ENCODE measurements at regions of chr1 and their contacts with region 1.

Region 1: GRCh38 chr1:74689621-74690363 is 16.2 kb upstream of the ERICH3 start:
- DNase-seq: no peak
- ATAC-seq: no peak
- H3K4me3 Mint-ChIP-seq: no peak overlapping the region
- H3K27ac Mint-ChIP-seq: no peak overlapping the region
- H3K4me1 Mint-ChIP-seq: no peaks in the 10 kb centered on the region
- H3K27me3 Mint-ChIP-seq: no peaks in the 10 kb centered on the region
- CTCF ChIP-seq: peak; percentile 21

Region 2: GRCh38 chr1:73886716-73887115 is 803.1 kb before region 1 on chr1:
- CTCF ChIA-PET with region 1: no interaction called
- POLR2A ChIA-PET with region 1: no interaction called
- intact Hi-C with region 1: no loop called
- DNase-seq: no peak
- ATAC-seq: no peak
- H3K4me3 Mint-ChIP-seq: no peak overlapping the region
- H3K27ac Mint-ChIP-seq: no peak overlapping the region
- H3K4me1 Mint-ChIP-seq: no peaks in the 10 kb centered on the region
- H3K27me3 Mint-ChIP-seq: no peaks in the 10 kb centered on the region
- CTCF ChIP-seq: no peak

Region 3: GRCh38 chr1:74280642-74281396 is 409.0 kb before region 1 on chr1:
- CTCF ChIA-PET with region 1: no interaction called
- POLR2A ChIA-PET with region 1: no interaction called
- intact Hi-C with region 1: no loop called
- DNase-seq: no peak
- ATAC-seq: no peak
- H3K4me3 Mint-ChIP-seq: no peak overlapping the region
- H3K27ac Mint-ChIP-seq: no peak overlapping the region
- H3K4me1 Mint-ChIP-seq: no peaks in the 10 kb centered on the region
- H3K27me3 Mint-ChIP-seq: no peaks in the 10 kb centered on the region
- CTCF ChIP-seq: no peak

Region 4: DNA sequence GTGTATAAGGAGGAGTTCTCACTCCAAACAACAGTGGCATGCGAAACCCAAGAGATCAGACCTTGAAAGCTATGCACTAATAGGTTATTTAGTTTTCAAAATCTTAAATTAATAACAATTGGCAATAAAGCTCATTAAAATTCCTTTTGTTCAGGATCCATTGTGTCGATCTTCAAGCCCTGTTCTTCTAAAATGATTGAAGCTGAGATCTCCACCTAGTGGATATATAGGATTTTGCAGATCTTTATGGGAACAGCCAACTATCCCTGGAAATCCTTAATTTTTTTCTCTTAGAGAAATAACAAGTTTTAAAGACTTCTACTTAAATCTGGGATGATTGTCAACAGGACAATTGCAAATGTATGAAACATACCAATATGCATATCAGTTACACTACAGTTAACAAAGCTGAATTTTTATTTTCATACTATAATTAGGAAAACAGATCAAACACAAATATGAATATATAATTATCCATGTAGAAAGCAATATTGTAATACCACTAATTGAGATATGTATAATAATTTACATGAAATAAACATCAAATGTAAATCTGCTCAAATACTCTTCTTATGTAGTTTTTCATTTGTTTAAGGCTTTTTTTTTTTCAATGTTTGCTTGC is 220.7 kb before region 1 on chr1:
- CTCF ChIA-PET with region 1: interaction called, 3 read pairs
- POLR2A ChIA-PET with region 1: no interaction called
- intact Hi-C with region 1: loop called (anchors 1 kb)
- DNase-seq: no peak
- ATAC-seq: no peak
- H3K4me3 Mint-ChIP-seq: no peak overlapping the region
- H3K27ac Mint-ChIP-seq: no peak overlapping the region
- H3K4me1 Mint-ChIP-seq: no peaks in the 10 kb centered on the region
- H3K27me3 Mint-ChIP-seq: peaks cover 3% of the 10 kb centered on the region
- CTCF ChIP-seq: no peak

Region 5: GRCh38 chr1:74504125-74504932 is 185.5 kb before region 1 on chr1:
- CTCF ChIA-PET with region 1: interaction called, 5 read pairs
- POLR2A ChIA-PET with region 1: no interaction called
- intact Hi-C with region 1: loop called (anchors 1 kb)
- DNase-seq: no peak
- ATAC-seq: peak; percentile 37
- H3K4me3 Mint-ChIP-seq: no peak overlapping the region
- H3K27ac Mint-ChIP-seq: no peak overlapping the region
- H3K4me1 Mint-ChIP-seq: no peaks in the 10 kb centered on the region
- H3K27me3 Mint-ChIP-seq: no peaks in the 10 kb centered on the region
- CTCF ChIP-seq: no peak